CD4-positive, alpha-beta memory T cell (primary cell): ENCODE measurements at regions of chr9 and their contacts with region 1.

Region 1: DNA sequence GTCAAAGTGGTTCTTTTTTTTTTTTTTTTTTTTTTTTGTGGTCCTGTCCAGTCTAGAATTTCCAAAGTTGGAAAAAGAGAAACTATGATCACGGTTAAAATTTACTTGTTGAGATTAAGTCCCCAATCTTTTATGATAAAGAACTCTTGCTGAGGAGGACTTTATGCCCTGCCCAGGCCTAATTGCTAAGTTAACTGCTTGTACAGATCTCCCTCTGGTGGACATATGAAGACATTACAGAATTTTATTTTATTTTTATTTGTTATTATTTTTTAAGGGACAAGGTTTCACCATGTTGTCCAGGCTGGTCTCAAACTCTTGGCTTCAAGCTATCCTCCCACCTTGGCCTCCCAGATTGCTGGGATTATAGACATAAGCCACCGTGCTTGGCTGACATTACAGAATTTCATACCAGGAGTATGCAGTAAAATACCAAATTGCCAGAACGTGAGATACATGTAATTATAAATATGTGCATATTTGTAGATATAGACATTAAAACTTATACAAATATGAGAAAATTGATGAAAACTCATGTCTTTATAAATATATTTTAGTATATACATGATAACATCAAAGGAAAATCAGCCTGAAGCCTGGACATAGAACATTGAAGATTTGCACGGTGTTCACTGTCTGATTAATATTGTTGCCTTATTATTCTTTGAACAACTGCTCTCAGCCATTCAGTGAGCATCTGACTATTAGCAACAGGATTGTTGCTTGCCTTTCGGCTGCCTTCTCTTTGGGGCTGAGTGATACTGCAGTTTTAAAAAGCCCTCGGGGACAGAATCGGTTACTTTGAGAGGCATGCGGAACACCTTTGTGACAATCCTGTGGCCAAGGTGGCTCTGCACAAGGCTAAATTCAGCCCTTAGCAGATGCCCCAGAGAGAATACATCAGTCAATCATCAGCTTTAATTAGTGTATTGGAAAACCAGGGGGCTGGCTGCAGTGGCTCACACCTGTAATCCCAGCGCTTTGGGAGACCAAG is 91.0 kb downstream of the RFK start:
- DNase-seq: peak in 4 of 5 donors; percentile 32 to 55 (median 46)
- H3K4me3 ChIP-seq: no peak overlapping the region
- H3K4me3 Mint-ChIP-seq: no peak overlapping the region
- H3K27ac ChIP-seq: no peak overlapping the region
- H3K27ac Mint-ChIP-seq: no peak overlapping the region
- H3K4me1 ChIP-seq: no peaks in the 10 kb centered on the region
- H3K4me1 Mint-ChIP-seq: no peaks in the 10 kb centered on the region
- H3K27me3 ChIP-seq: no peaks in the 10 kb centered on the region
- H3K27me3 Mint-ChIP-seq: peaks cover 6 to 12% of the 10 kb centered on the region in 2 donors

Region 2: DNA sequence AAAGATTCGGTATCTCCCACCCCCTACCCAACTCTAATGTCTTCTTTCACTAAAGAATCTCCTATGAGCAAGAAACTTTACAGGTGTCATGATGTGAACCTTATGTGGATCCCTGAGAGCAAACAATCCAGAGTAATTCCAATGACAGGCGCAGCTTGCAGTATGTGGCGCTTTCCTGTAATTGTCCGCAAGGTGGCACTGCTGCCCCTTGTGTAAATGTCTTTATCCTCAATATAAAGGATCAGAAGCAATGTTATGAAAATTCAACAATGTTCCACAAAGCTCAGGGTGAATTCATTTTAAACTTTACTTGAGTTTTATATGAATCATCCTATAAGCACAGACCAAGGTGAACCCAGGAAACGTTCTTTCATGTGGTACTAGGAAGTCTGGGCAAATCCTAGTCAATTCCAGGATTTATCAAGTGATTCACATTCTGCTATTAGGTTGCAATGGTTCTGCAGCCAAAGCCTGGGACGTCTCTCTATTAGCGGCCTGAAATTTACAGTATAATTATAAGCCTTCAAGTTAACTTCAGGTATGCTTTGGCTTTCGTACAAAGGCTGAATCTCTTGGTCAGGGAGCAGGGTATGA is 1529.3 kb before region 1 on chr9:
- CTCF ChIA-PET with region 1: interaction called, 3 read pairs
- POLR2A ChIA-PET with region 1: no interaction called
- intact Hi-C with region 1: loop called (anchors 2 kb)
- DNase-seq: peak; percentile 61 to 66 (median 61)
- H3K4me3 ChIP-seq: no peak overlapping the region
- H3K4me3 Mint-ChIP-seq: no peak overlapping the region
- H3K27ac ChIP-seq: no peak overlapping the region
- H3K27ac Mint-ChIP-seq: no peak overlapping the region
- H3K4me1 ChIP-seq: no peaks in the 10 kb centered on the region
- H3K4me1 Mint-ChIP-seq: peaks cover 0 to 3% (median 2%) of the 10 kb centered on the region in 4 donors
- H3K27me3 ChIP-seq: no peaks in the 10 kb centered on the region
- H3K27me3 Mint-ChIP-seq: peaks cover 14 to 19% of the 10 kb centered on the region in 2 donors

Region 3: GRCh38 chr9:75265525-75265972 is 1037.7 kb before region 1 on chr9:
- CTCF ChIA-PET with region 1: interaction called, 35 read pairs
- POLR2A ChIA-PET with region 1: no interaction called
- intact Hi-C with region 1: no loop called
- DNase-seq: peak in 4 of 5 donors; percentile 34 to 45 (median 41)
- H3K4me3 ChIP-seq: no peak overlapping the region
- H3K4me3 Mint-ChIP-seq: peak overlapping the region in 1 of 8 donors; percentile 16
- H3K27ac ChIP-seq: no peak overlapping the region
- H3K27ac Mint-ChIP-seq: no peak overlapping the region
- H3K4me1 ChIP-seq: no peaks in the 10 kb centered on the region
- H3K4me1 Mint-ChIP-seq: peaks cover 0 to 5% (median 2%) of the 10 kb centered on the region in 4 donors
- H3K27me3 ChIP-seq: no peaks in the 10 kb centered on the region
- H3K27me3 Mint-ChIP-seq: no peaks in the 10 kb centered on the region

Region 4: GRCh38 chr9:75866273-75866871 is 436.9 kb before region 1 on chr9:
- CTCF ChIA-PET with region 1: interaction called, 18 read pairs
- POLR2A ChIA-PET with region 1: no interaction called
- intact Hi-C with region 1: loop called (anchors 2 kb)
- DNase-seq: peak in 4 of 5 donors; percentile 18 to 38 (median 37)
- H3K4me3 ChIP-seq: no peak overlapping the region
- H3K4me3 Mint-ChIP-seq: no peak overlapping the region
- H3K27ac ChIP-seq: no peak overlapping the region
- H3K27ac Mint-ChIP-seq: no peak overlapping the region
- H3K4me1 ChIP-seq: no peaks in the 10 kb centered on the region
- H3K4me1 Mint-ChIP-seq: peaks cover 0 to 8% (median 6%) of the 10 kb centered on the region in 4 donors
- H3K27me3 ChIP-seq: no peaks in the 10 kb centered on the region
- H3K27me3 Mint-ChIP-seq: peaks cover 0 to 7% of the 10 kb centered on the region in 2 donors

Region 5: DNA sequence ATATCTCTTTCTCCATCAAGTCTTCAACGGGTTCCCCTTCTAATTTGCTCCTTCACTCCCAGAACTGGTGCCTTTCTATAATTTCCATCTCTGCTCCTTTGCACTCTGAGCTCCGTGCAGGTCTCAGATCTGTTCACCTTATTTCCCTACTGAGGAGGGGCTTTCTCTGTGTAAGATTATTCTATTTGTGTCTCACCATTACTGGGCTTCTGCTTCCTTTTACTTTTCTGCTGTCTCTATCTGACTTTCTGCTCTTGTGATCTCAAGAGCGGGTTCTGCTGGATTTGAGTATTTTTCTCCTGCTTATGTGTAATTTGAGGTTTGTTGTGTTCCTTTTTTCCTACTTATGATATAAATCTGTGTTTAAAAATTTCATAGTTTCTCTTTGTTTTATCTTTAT is 295.3 kb before region 1 on chr9:
- CTCF ChIA-PET with region 1: interaction called, 12 read pairs
- POLR2A ChIA-PET with region 1: no interaction called
- intact Hi-C with region 1: loop called (anchors 2 kb)
- DNase-seq: no peak
- H3K4me3 ChIP-seq: no peak overlapping the region
- H3K4me3 Mint-ChIP-seq: peak overlapping the region in 3 of 8 donors; percentile 19 to 71 (median 63)
- H3K27ac ChIP-seq: no peak overlapping the region
- H3K27ac Mint-ChIP-seq: peak overlapping the region in 3 of 7 donors; percentile 18 to 38 (median 32)
- H3K4me1 ChIP-seq: peaks cover 6% of the 10 kb centered on the region
- H3K4me1 Mint-ChIP-seq: peaks cover 13 to 29% (median 20%) of the 10 kb centered on the region in 4 donors
- H3K27me3 ChIP-seq: no peaks in the 10 kb centered on the region
- H3K27me3 Mint-ChIP-seq: no peaks in the 10 kb centered on the region

Region 6: GRCh38 chr9:76198336-76198735 is 104.9 kb before region 1 on chr9:
- CTCF ChIA-PET with region 1: no interaction called
- POLR2A ChIA-PET with region 1: no interaction called
- intact Hi-C with region 1: no loop called
- DNase-seq: no peak
- H3K4me3 ChIP-seq: no peak overlapping the region
- H3K4me3 Mint-ChIP-seq: no peak overlapping the region
- H3K27ac ChIP-seq: no peak overlapping the region
- H3K27ac Mint-ChIP-seq: no peak overlapping the region
- H3K4me1 ChIP-seq: no peaks in the 10 kb centered on the region
- H3K4me1 Mint-ChIP-seq: peaks cover 0 to 2% (median 0%) of the 10 kb centered on the region in 4 donors
- H3K27me3 ChIP-seq: no peaks in the 10 kb centered on the region
- H3K27me3 Mint-ChIP-seq: peaks cover 0 to 4% of the 10 kb centered on the region in 2 donors

Region 7: GRCh38 chr9:76292246-76292645 is 11.0 kb before region 1 on chr9:
- CTCF ChIA-PET with region 1: interaction called, 46 read pairs
- POLR2A ChIA-PET with region 1: no interaction called
- intact Hi-C with region 1: no loop called
- DNase-seq: no peak
- H3K4me3 ChIP-seq: no peak overlapping the region
- H3K4me3 Mint-ChIP-seq: no peak overlapping the region
- H3K27ac ChIP-seq: no peak overlapping the region
- H3K27ac Mint-ChIP-seq: no peak overlapping the region
- H3K4me1 ChIP-seq: no peaks in the 10 kb centered on the region
- H3K4me1 Mint-ChIP-seq: no peaks in the 10 kb centered on the region
- H3K27me3 ChIP-seq: no peaks in the 10 kb centered on the region
- H3K27me3 Mint-ChIP-seq: peaks cover 0 to 3% of the 10 kb centered on the region in 2 donors

Region 8: GRCh38 chr9:76353280-76353679 is 50.0 kb after region 1 on chr9:
- CTCF ChIA-PET with region 1: no interaction called
- POLR2A ChIA-PET with region 1: no interaction called
- intact Hi-C with region 1: no loop called
- DNase-seq: no peak
- H3K4me3 ChIP-seq: no peak overlapping the region
- H3K4me3 Mint-ChIP-seq: no peak overlapping the region
- H3K27ac ChIP-seq: no peak overlapping the region
- H3K27ac Mint-ChIP-seq: no peak overlapping the region
- H3K4me1 ChIP-seq: no peaks in the 10 kb centered on the region
- H3K4me1 Mint-ChIP-seq: no peaks in the 10 kb centered on the region
- H3K27me3 ChIP-seq: no peaks in the 10 kb centered on the region
- H3K27me3 Mint-ChIP-seq: peaks cover 4 to 9% of the 10 kb centered on the region in 2 donors

Region 9: GRCh38 chr9:76369583-76369982 is 66.3 kb after region 1 on chr9:
- CTCF ChIA-PET with region 1: no interaction called
- POLR2A ChIA-PET with region 1: no interaction called
- intact Hi-C with region 1: no loop called
- DNase-seq: no peak
- H3K4me3 ChIP-seq: no peak overlapping the region
- H3K4me3 Mint-ChIP-seq: no peak overlapping the region
- H3K27ac ChIP-seq: no peak overlapping the region
- H3K27ac Mint-ChIP-seq: no peak overlapping the region
- H3K4me1 ChIP-seq: no peaks in the 10 kb centered on the region
- H3K4me1 Mint-ChIP-seq: no peaks in the 10 kb centered on the region
- H3K27me3 ChIP-seq: no peaks in the 10 kb centered on the region
- H3K27me3 Mint-ChIP-seq: peaks cover 3 to 4% of the 10 kb centered on the region in 2 donors